Psoas muscle (tissue), 8 donors: ENCODE measurements at regions of chr1 and their contacts with region 1.

Region 1: DNA sequence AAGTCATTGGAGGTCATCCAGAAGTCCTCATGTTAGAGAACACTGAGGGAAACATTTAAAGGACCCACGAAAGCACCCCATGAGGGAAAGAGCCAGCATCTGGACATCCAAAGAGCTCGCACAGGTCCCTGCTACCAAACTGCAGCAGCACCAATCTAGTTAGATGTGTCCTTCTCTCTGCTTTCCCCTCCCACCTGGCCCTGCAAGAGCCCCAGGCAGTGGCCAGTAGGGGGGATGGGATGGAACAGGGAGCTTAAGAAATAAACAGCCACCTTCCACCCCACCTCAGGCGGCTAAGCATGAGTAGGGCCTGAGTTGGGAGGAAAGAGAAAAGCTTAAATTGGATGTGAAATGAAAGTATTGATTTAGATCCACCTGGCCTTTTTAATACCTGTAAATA is 175.9 kb upstream of the KCND3 start:
- DNase-seq: no peak
- ATAC-seq: no peak
- H3K4me3 ChIP-seq: no peak overlapping the region
- H3K27ac ChIP-seq: no peak overlapping the region
- H3K4me1 ChIP-seq: no peaks in the 10 kb centered on the region
- H3K27me3 ChIP-seq: no peaks in the 10 kb centered on the region
- CTCF ChIP-seq: no peak

Region 2: GRCh38 chr1:112063781-112064728 is 101.3 kb before region 1 on chr1:
- intact Hi-C with region 1: no loop called
- DNase-seq: no peak
- ATAC-seq: no peak
- H3K4me3 ChIP-seq: no peak overlapping the region
- H3K27ac ChIP-seq: no peak overlapping the region
- H3K4me1 ChIP-seq: no peaks in the 10 kb centered on the region
- H3K27me3 ChIP-seq: peaks cover 0 to 6% (median 0%) of the 10 kb centered on the region in 3 donors
- CTCF ChIP-seq: no peak

Region 3: GRCh38 chr1:112146201-112146715 is 19.1 kb before region 1 on chr1:
- intact Hi-C with region 1: loop called in 1 of 2 experiments (anchors 2 kb)
- DNase-seq: no peak
- ATAC-seq: peak in 2 of 4 donors; percentile 40 to 41
- H3K4me3 ChIP-seq: no peak overlapping the region
- H3K27ac ChIP-seq: no peak overlapping the region
- H3K4me1 ChIP-seq: peaks cover 11% of the 10 kb centered on the region
- H3K27me3 ChIP-seq: no peaks in the 10 kb centered on the region
- CTCF ChIP-seq: no peak